Body of pancreas (tissue), 4 donors: ENCODE measurements at regions of chr18 and their contacts with region 1.

Region 1: DNA sequence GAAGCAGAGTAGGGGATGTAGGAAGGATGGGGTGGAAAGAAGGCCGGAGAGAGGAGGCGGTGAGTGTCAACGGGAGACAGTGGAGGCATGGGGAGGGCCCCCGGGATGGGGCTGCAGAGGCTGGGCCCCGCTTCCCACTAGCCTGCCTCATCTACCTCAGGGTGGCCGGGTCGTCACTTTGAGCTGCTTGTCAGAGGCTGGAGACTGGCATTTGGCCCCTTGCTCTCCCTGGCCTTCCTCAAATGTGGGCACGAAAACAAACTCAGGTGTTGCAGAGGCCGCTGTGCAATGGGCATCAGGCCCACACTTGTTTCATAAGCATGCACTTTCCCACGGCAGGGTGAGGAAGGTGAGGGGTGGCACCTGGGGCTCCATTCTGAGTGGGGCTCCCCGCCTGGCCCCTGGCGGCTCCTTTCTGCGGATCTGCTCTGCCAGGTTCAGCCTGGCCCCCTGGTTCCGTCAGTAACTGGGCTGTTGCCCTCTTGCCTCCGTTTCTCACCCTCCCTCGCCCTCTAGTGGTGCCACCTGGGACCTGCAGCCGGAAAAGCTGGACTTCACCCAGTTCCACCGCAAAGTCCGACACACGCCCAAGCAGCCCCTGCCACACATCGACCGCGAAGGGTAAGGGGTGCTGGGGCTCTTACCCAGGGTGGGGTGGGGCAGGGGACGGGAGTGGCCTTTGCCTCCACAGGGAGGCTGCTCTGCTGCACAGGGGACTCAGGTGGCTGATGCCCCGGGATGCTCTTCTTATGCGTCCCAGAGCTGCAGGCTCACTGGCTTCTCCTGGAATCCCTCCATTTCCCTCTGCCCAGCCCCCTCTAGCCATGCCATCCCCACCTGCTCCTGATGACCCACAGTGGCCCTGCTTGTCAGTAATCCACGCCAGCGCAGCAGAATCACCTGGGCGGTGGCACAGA is 125.4 kb downstream of the CTIF start:
- DNase-seq: peak; percentile 68 to 78 (median 75)
- ATAC-seq: peak; percentile 63
- H3K4me3 ChIP-seq: no peak overlapping the region
- H3K27ac ChIP-seq: peak overlapping the region in 1 of 4 donors; percentile 31
- H3K4me1 ChIP-seq: peaks cover 16% of the 10 kb centered on the region
- H3K27me3 ChIP-seq: no peaks in the 10 kb centered on the region
- CTCF ChIP-seq: peak; percentile 73 to 95 (median 90)
- POLR2A ChIP-seq: no peak

Region 2: GRCh38 chr18:48385596-48385995 is 278.6 kb before region 1 on chr18:
- intact Hi-C with region 1: no loop called
- DNase-seq: no peak
- ATAC-seq: no peak
- H3K4me3 ChIP-seq: no peak overlapping the region
- H3K27ac ChIP-seq: no peak overlapping the region
- H3K4me1 ChIP-seq: no peaks in the 10 kb centered on the region
- H3K27me3 ChIP-seq: no peaks in the 10 kb centered on the region
- CTCF ChIP-seq: no peak
- POLR2A ChIP-seq: no peak

Region 3: GRCh38 chr18:48475635-48476549 is 188.3 kb before region 1 on chr18:
- intact Hi-C with region 1: loop called (anchors 5 kb)
- DNase-seq: peak; percentile 59 to 76 (median 64)
- ATAC-seq: peak; percentile 90
- H3K4me3 ChIP-seq: no peak overlapping the region
- H3K27ac ChIP-seq: no peak overlapping the region
- H3K4me1 ChIP-seq: peaks cover 4% of the 10 kb centered on the region
- H3K27me3 ChIP-seq: no peaks in the 10 kb centered on the region
- CTCF ChIP-seq: peak; percentile 64 to 91 (median 88)
- POLR2A ChIP-seq: no peak

Region 4: DNA sequence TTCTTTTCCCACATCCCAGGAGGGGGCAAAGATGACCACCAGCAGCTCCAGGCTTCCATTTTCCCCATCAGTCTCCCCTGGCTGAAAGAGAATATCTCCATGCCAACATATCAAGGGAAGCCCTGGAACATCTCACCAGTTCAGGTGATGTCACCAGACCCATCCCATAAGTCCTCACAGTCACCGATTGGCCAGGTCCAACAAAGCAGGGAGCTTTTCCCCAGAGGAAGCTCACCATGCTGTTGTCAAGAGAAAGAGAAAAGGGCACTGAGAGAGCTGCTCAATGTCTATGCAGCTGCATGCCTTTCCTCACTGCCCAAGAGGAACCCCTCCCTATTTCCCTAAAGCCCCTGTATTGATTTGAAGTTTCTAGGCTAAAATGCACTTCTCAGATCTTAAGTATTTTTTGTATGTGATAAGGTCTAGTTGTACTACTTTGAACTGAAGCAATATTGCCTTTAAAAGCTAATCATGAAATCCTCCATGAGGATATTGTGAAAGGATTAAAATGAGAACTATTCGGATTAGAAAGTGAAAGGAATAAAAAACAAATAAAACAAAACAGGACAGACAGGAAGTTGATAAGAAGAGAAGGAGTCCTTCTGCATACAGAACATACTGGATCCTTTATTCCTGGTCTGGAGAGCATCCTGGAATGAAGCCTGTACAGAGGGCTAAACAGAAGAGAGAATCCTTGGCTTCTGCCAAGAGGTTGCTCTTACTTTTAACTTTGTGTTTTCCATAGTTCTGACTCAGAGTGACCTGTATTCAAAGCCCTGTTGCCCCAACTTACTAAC is 170.6 kb before region 1 on chr18:
- intact Hi-C with region 1: no loop called
- DNase-seq: no peak
- ATAC-seq: peak; percentile 69
- H3K4me3 ChIP-seq: no peak overlapping the region
- H3K27ac ChIP-seq: peak overlapping the region in 1 of 4 donors; percentile 49
- H3K4me1 ChIP-seq: peaks cover 14% of the 10 kb centered on the region
- H3K27me3 ChIP-seq: no peaks in the 10 kb centered on the region
- CTCF ChIP-seq: no peak
- POLR2A ChIP-seq: no peak